Endothelial cell of umbilical vein (primary cell): ENCODE measurements at regions of chr1 and their contacts with region 1.

Region 1: GRCh38 chr1:218377143-218377660 is 32.1 kb downstream of the TGFB2 start:
- DNase-seq: peak; percentile 88
- H3K4me3 ChIP-seq: no peak overlapping the region
- H3K27ac ChIP-seq: peak overlapping the region; percentile 72
- H3K4me1 ChIP-seq: peaks cover 47% of the 10 kb centered on the region
- H3K27me3 ChIP-seq: no peaks in the 10 kb centered on the region
- CTCF ChIP-seq: no peak
- POLR2A ChIP-seq: peak; percentile 51

Region 2: GRCh38 chr1:218305472-218306064 is 71.6 kb before region 1 on chr1:
- CTCF ChIA-PET with region 1: no interaction called
- POLR2A ChIA-PET with region 1: no interaction called
- dilution Hi-C with region 1: no loop called
- intact Hi-C with region 1: no loop called
- DNase-seq: no peak
- H3K4me3 ChIP-seq: no peak overlapping the region
- H3K27ac ChIP-seq: no peak overlapping the region
- H3K4me1 ChIP-seq: no peaks in the 10 kb centered on the region
- H3K27me3 ChIP-seq: no peaks in the 10 kb centered on the region
- CTCF ChIP-seq: no peak
- POLR2A ChIP-seq: no peak

Region 3: GRCh38 chr1:218351391-218352074 is 25.7 kb before region 1 on chr1:
- CTCF ChIA-PET with region 1: no interaction called
- POLR2A ChIA-PET with region 1: no interaction called
- dilution Hi-C with region 1: no loop called
- intact Hi-C with region 1: loop called (anchors 1 kb)
- DNase-seq: peak; percentile 77
- H3K4me3 ChIP-seq: peak overlapping the region in 2 of 3 experiments; percentile 25 to 95
- H3K27ac ChIP-seq: peak overlapping the region; percentile 64
- H3K4me1 ChIP-seq: peaks cover 39% of the 10 kb centered on the region
- H3K27me3 ChIP-seq: no peaks in the 10 kb centered on the region
- CTCF ChIP-seq: peak; percentile 47 to 65
- POLR2A ChIP-seq: no peak

Region 4: GRCh38 chr1:218459878-218460711 is 82.9 kb after region 1 on chr1:
- CTCF ChIA-PET with region 1: interaction called, 3 read pairs
- POLR2A ChIA-PET with region 1: no interaction called
- dilution Hi-C with region 1: no loop called
- intact Hi-C with region 1: loop called (anchors 1 kb)
- DNase-seq: peak; percentile 82
- H3K4me3 ChIP-seq: peak overlapping the region in 1 of 3 experiments; percentile 44
- H3K27ac ChIP-seq: peak overlapping the region; percentile 98
- H3K4me1 ChIP-seq: peaks cover 44% of the 10 kb centered on the region
- H3K27me3 ChIP-seq: no peaks in the 10 kb centered on the region
- CTCF ChIP-seq: no peak
- POLR2A ChIP-seq: no peak

Region 5: GRCh38 chr1:218499011-218499691 is 121.9 kb after region 1 on chr1:
- CTCF ChIA-PET with region 1: no interaction called
- POLR2A ChIA-PET with region 1: no interaction called
- dilution Hi-C with region 1: no loop called
- intact Hi-C with region 1: loop called (anchors 1 kb)
- DNase-seq: peak; percentile 83
- H3K4me3 ChIP-seq: peak overlapping the region in 1 of 3 experiments; percentile 60
- H3K27ac ChIP-seq: peak overlapping the region; percentile 93
- H3K4me1 ChIP-seq: peaks cover 29% of the 10 kb centered on the region
- H3K27me3 ChIP-seq: no peaks in the 10 kb centered on the region
- CTCF ChIP-seq: no peak
- POLR2A ChIP-seq: no peak

Region 6: GRCh38 chr1:218705911-218706893 is 329.0 kb after region 1 on chr1:
- CTCF ChIA-PET with region 1: no interaction called
- POLR2A ChIA-PET with region 1: no interaction called
- dilution Hi-C with region 1: no loop called
- intact Hi-C with region 1: loop called (anchors 1 kb)
- DNase-seq: peak; percentile 74
- H3K4me3 ChIP-seq: no peak overlapping the region
- H3K27ac ChIP-seq: peak overlapping the region; percentile 86
- H3K4me1 ChIP-seq: peaks cover 26% of the 10 kb centered on the region
- H3K27me3 ChIP-seq: no peaks in the 10 kb centered on the region
- CTCF ChIP-seq: no peak
- POLR2A ChIP-seq: no peak